ENCODE measurements at regions of chr6 and their contacts with region 1.

Region 1: DNA sequence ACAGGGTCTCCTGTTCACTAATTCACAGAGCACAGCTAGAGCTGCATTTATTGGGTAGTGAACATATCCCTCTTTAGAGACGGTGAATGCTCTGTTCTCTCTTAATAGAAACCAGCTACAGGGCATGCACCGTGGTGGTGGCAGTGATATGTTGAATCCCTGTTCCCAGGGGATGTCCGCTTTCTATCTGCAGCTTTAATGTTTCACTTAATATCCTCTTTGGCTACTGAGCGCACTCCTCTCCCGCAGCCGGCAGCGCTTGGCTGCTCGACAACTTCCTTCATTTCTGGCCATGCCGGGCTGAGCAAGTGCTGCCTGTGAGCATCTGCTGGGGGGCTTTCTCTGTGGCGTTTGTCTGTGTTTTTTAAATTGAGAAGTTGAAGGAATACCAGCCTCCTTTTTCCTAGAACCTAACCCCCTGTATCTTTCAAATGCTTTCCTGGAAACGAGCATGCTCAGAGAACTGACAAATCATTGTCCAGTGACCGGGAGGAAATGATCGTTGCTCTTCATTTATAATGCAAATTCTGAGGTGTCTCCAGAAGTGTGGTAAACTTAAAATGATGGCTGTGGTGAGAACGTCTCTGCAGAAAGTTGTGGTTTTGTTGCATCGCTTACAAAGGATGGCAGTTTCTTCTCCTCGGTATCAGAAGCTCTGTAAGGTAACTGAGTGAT is 297.9 kb downstream of the UTRN start:
- DNase-seq: peak; percentile 54
- ATAC-seq: peak; percentile 89
- H3K4me3 Mint-ChIP-seq: peak overlapping the region; percentile 71
- H3K27ac Mint-ChIP-seq: peak overlapping the region; percentile 86
- H3K4me1 Mint-ChIP-seq: peaks cover 39% of the 10 kb centered on the region
- H3K27me3 Mint-ChIP-seq: no peaks in the 10 kb centered on the region

Region 2: GRCh38 chr6:144597511-144597910 is 14.4 kb after region 1 on chr6:
- CTCF ChIA-PET with region 1: interaction called, 89 read pairs
- POLR2A ChIA-PET with region 1: interaction called, 4 read pairs
- intact Hi-C with region 1: loop called (anchors 1 to 2 kb)
- DNase-seq: peak; percentile 20
- ATAC-seq: peak; percentile 92
- H3K4me3 Mint-ChIP-seq: no peak overlapping the region
- H3K27ac Mint-ChIP-seq: no peak overlapping the region
- H3K4me1 Mint-ChIP-seq: peaks cover 38% of the 10 kb centered on the region
- H3K27me3 Mint-ChIP-seq: no peaks in the 10 kb centered on the region

Region 3: GRCh38 chr6:144667532-144668503 is 84.7 kb after region 1 on chr6:
- CTCF ChIA-PET with region 1: no interaction called
- POLR2A ChIA-PET with region 1: no interaction called
- intact Hi-C with region 1: no loop called
- DNase-seq: no peak
- ATAC-seq: no peak
- H3K4me3 Mint-ChIP-seq: no peak overlapping the region
- H3K27ac Mint-ChIP-seq: no peak overlapping the region
- H3K4me1 Mint-ChIP-seq: peaks cover 49% of the 10 kb centered on the region
- H3K27me3 Mint-ChIP-seq: no peaks in the 10 kb centered on the region

Region 4: GRCh38 chr6:144722154-144722737 is 139.2 kb after region 1 on chr6:
- CTCF ChIA-PET with region 1: no interaction called
- POLR2A ChIA-PET with region 1: no interaction called
- intact Hi-C with region 1: loop called in 1 of 2 experiments (anchors 5 kb)
- DNase-seq: no peak
- ATAC-seq: no peak
- H3K4me3 Mint-ChIP-seq: no peak overlapping the region
- H3K27ac Mint-ChIP-seq: peak overlapping the region; percentile 23
- H3K4me1 Mint-ChIP-seq: peaks cover 26% of the 10 kb centered on the region
- H3K27me3 Mint-ChIP-seq: no peaks in the 10 kb centered on the region

Region 5: GRCh38 chr6:144931172-144932035 is 348.3 kb after region 1 on chr6:
- CTCF ChIA-PET with region 1: interaction called, 7 read pairs
- POLR2A ChIA-PET with region 1: no interaction called
- intact Hi-C with region 1: loop called (anchors 1 kb)
- DNase-seq: peak; percentile 60
- ATAC-seq: peak; percentile 64
- H3K4me3 Mint-ChIP-seq: no peak overlapping the region
- H3K27ac Mint-ChIP-seq: no peak overlapping the region
- H3K4me1 Mint-ChIP-seq: no peaks in the 10 kb centered on the region
- H3K27me3 Mint-ChIP-seq: peaks cover 4% of the 10 kb centered on the region

Region 6: GRCh38 chr6:145214570-145214969 is 631.5 kb after region 1 on chr6:
- CTCF ChIA-PET with region 1: interaction called, 3 read pairs
- POLR2A ChIA-PET with region 1: no interaction called
- intact Hi-C with region 1: loop called (anchors 1 to 2 kb)
- DNase-seq: peak; percentile 5
- ATAC-seq: no peak
- H3K4me3 Mint-ChIP-seq: no peak overlapping the region
- H3K27ac Mint-ChIP-seq: no peak overlapping the region
- H3K4me1 Mint-ChIP-seq: peaks cover 7% of the 10 kb centered on the region
- H3K27me3 Mint-ChIP-seq: peaks cover 2% of the 10 kb centered on the region

Region 7: DNA sequence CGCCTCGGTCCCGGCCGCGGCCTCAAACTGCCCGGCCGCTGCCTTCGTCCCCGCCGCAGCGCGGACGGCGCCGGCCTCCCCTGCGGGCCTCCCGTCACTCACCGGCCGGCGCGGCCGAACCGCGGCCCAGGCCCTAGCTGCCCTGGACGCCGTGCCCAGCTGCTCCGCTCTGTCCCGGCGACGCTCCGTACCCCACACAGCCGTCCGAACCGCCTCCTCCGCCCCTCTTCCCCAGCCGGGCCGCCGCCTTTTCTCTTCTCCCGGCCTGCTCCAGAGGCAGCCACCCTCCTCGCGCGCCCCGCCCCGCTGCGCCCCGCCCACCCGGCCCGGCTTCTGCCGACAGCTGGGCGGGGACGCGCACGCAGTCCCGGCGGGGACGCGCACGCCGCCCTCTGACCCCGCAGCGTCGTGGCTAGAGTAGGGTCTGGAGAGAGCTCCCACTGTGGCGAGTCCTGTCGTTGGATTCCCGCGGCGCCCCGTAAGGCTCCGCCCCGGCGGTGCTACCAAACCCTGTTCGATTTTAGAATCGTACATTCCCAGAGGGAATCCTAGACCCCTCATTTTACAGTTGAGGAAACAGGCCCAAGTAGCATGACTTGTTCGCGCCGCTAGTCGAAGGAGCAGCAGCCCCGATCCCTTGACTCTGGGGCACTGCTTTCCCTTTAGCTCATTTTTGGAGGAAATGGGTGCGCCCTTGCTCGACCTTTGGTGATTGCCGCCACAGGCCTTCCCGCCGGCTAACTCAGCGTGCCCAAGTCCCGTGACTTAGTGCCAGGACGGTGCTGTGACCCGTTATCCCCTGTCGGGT is 1231.6 kb after region 1 on chr6 and contains the start of gene FBXO30:
- CTCF ChIA-PET with region 1: no interaction called
- POLR2A ChIA-PET with region 1: no interaction called
- intact Hi-C with region 1: loop called in 1 of 2 experiments (anchors 10 kb)
- DNase-seq: peak; percentile 90
- ATAC-seq: peak; percentile 77
- H3K4me3 Mint-ChIP-seq: peak within 1 kb of the TSS; percentile 89
- H3K27ac Mint-ChIP-seq: peak within 1 kb of the TSS; percentile 89
- H3K4me1 Mint-ChIP-seq: peaks cover 37% of the 10 kb centered on the region
- H3K27me3 Mint-ChIP-seq: no peaks in the 10 kb centered on the region
- total RNA-seq, gene FBXO30: 2.3 to 2.8 TPM